ENCODE measurements at regions of chr2 and their contacts with region 1.

Region 1: DNA sequence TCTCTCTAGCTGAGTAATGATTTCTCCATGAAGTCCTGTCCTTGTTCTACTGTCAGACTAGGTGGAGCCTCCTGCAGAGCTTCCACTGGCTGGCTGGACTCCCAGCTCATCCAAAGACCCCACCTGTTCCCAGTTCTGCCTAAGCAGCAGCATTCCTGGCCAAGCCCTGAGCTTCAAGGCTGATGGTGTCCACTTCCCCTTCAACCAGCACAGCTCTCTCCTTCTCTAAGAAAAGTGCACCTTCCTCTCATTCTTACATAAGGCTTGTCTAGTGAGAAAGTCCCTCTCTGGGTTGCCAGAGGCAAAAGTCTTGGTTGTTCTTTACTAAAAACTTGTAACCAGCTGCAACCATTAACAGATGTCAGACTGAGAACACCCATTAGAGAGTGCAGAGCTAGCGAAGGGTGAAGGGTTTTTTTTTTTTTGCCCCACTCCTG is 58.9 kb downstream of the CXCR4 start:
- DNase-seq: no peak
- H3K4me3 Mint-ChIP-seq: no peak overlapping the region
- H3K27ac Mint-ChIP-seq: no peak overlapping the region
- H3K4me1 Mint-ChIP-seq: peaks cover 59% of the 10 kb centered on the region
- H3K27me3 Mint-ChIP-seq: no peaks in the 10 kb centered on the region

Region 2: GRCh38 chr2:135490376-135490775 is 568.7 kb before region 1 on chr2:
- CTCF ChIA-PET with region 1: no interaction called
- intact Hi-C with region 1: no loop called
- DNase-seq: no peak
- H3K4me3 Mint-ChIP-seq: no peak overlapping the region
- H3K27ac Mint-ChIP-seq: no peak overlapping the region
- H3K4me1 Mint-ChIP-seq: no peaks in the 10 kb centered on the region
- H3K27me3 Mint-ChIP-seq: no peaks in the 10 kb centered on the region

Region 3: DNA sequence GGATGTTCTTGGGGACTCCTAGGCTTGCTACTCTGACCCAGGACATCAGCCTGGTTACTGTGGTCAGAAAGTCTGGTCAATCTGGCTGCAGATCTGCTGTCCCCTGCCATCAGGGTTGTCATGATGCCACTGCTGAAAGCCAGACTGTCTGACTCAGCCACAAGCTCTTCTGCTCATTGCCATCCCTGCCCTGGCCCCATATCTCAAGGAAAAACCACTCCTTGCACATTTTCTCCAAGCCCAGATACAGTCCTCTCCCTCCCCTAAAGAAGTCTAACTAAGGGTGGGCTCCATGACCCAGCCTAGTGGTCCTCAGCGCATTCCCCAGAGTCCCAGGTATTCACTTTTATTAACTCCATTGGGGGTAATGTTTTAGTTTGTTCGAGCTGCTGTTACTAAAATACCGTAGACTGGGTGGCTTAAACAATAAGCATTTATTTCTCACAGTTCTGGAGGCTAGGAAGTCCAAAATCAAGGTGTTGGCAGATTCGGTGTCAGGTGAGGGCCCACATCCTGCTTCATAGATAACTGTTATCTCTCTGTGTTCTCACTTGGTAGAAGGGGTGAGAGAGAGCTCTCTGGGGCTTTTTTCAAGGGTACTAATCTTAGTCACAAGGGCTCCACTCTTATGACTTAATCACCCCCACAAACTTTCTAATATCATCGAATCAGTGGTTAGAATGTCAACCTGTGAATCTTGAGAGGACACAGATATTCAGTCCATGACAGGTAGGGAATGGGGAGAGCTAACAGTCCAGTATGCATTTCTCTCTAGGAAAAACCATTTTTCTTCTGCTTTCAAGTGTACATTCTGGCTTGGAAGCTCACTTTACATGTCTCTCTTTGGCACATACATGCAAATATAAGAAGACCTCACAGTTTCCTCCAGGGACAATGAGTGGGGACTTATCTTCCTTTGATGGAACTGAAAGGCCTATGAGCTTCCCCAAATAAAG is 153.6 kb after region 1 on chr2:
- CTCF ChIA-PET with region 1: no interaction called
- intact Hi-C with region 1: loop called (anchors 2 kb)
- DNase-seq: peak; percentile 67
- H3K4me3 Mint-ChIP-seq: no peak overlapping the region
- H3K27ac Mint-ChIP-seq: peak overlapping the region; percentile 3
- H3K4me1 Mint-ChIP-seq: peaks cover 43% of the 10 kb centered on the region
- H3K27me3 Mint-ChIP-seq: no peaks in the 10 kb centered on the region

Measured in activated naive CD4-positive, alpha-beta T cell treated with anti-CD3 and anti-CD28 coated beads for 36 hours (primary cell).